Calu3 (cell line): ENCODE measurements at regions of chr20 and their contacts with region 1.

Region 1: DNA sequence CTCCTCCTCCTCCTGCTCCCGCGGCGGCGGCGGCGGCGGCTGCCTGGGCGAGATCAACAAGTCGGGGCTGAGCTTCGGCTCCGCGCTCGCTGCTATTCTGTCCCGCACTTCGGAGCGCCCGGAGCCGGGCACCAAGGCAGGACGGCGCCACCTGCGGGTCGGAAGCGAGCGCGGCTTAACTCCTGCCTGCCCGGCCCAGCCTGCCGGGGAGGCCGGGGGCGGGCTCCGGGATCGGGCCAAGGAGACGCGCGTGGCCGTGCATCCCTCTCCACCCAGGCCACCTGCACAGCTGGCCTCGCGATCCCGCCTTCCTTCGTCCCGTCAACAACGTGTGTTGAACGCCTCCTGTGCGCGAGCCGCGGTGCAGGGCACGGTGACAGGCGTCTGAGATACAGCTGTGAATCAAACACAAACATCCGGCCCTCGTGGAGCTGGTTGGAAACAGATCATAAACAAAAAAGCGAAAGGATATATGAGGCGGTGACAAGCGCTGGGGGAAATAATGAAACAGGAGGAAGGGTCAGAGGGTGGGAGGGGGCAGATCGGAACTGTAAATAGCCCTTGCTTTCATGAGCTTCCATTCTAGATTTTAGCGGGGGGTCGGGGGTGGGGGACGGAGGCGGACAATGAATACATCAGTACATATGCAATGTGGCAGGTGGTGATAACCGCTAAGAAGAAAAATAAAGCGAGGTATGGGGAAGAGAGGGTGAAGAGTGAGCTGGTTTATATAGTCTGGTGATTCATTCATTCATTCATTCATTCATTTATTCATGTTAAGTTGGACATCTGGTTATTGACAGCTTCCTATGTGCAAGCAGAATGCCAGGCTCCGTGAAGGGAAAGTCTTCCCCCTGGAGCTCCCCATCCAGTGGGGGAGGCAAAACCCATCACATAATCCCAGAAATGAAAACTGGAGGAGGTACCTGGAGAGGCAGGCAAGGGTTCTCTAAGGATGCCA is 2.0 kb upstream of the KCNB1 start:
- DNase-seq: peak; percentile 94
- H3K4me3 Mint-ChIP-seq: peak overlapping the region; percentile 70
- H3K27ac Mint-ChIP-seq: no peak overlapping the region
- H3K4me1 Mint-ChIP-seq: no peaks in the 10 kb centered on the region
- H3K27me3 Mint-ChIP-seq: peaks cover 100% of the 10 kb centered on the region
- CTCF ChIP-seq: peak; percentile 86

Region 2: GRCh38 chr20:49338061-49338460 is 146.4 kb before region 1 on chr20:
- CTCF ChIA-PET with region 1: interaction called, 18 read pairs
- intact Hi-C with region 1: loop called (anchors 1 kb)
- DNase-seq: no peak
- H3K4me3 Mint-ChIP-seq: no peak overlapping the region
- H3K27ac Mint-ChIP-seq: no peak overlapping the region
- H3K4me1 Mint-ChIP-seq: no peaks in the 10 kb centered on the region
- H3K27me3 Mint-ChIP-seq: peaks cover 62% of the 10 kb centered on the region
- CTCF ChIP-seq: no peak

Region 3: DNA sequence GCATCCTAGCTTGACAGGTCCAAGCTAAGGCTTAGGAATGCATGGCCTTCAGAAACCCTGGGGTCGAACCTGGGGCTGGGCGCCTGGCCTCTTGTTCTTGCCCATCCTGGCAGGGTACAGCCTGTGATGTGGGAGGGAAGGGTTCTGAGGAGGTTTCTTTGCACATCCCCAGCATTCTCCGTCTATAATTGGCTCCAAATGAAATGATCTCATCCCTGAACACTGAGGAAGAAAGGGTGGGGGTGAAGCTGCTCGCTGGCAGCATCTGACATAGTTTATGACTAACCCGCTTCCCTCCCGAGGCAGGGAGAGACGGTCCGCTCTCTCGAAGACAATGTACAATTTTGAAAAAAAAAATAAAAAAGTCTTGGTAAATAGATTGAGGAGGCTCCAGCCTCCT is 139.5 kb before region 1 on chr20:
- CTCF ChIA-PET with region 1: interaction called, 11 read pairs
- intact Hi-C with region 1: no loop called
- DNase-seq: peak; percentile 72
- H3K4me3 Mint-ChIP-seq: peak overlapping the region; percentile 38
- H3K27ac Mint-ChIP-seq: no peak overlapping the region
- H3K4me1 Mint-ChIP-seq: peaks cover 16% of the 10 kb centered on the region
- H3K27me3 Mint-ChIP-seq: peaks cover 84% of the 10 kb centered on the region
- CTCF ChIP-seq: no peak

Region 4: GRCh38 chr20:49384437-49385088 is 99.9 kb before region 1 on chr20:
- CTCF ChIA-PET with region 1: interaction called, 22 read pairs
- intact Hi-C with region 1: no loop called
- DNase-seq: peak; percentile 89
- H3K4me3 Mint-ChIP-seq: no peak overlapping the region
- H3K27ac Mint-ChIP-seq: no peak overlapping the region
- H3K4me1 Mint-ChIP-seq: peaks cover 8% of the 10 kb centered on the region
- H3K27me3 Mint-ChIP-seq: peaks cover 89% of the 10 kb centered on the region
- CTCF ChIP-seq: peak; percentile 96

Region 5: GRCh38 chr20:49508435-49509199 is 24.2 kb after region 1 on chr20:
- CTCF ChIA-PET with region 1: interaction called, 14 read pairs
- intact Hi-C with region 1: loop called (anchors 2 kb)
- DNase-seq: peak; percentile 32
- H3K4me3 Mint-ChIP-seq: no peak overlapping the region
- H3K27ac Mint-ChIP-seq: no peak overlapping the region
- H3K4me1 Mint-ChIP-seq: no peaks in the 10 kb centered on the region
- H3K27me3 Mint-ChIP-seq: peaks cover 1% of the 10 kb centered on the region
- CTCF ChIP-seq: peak; percentile 75

Region 6: DNA sequence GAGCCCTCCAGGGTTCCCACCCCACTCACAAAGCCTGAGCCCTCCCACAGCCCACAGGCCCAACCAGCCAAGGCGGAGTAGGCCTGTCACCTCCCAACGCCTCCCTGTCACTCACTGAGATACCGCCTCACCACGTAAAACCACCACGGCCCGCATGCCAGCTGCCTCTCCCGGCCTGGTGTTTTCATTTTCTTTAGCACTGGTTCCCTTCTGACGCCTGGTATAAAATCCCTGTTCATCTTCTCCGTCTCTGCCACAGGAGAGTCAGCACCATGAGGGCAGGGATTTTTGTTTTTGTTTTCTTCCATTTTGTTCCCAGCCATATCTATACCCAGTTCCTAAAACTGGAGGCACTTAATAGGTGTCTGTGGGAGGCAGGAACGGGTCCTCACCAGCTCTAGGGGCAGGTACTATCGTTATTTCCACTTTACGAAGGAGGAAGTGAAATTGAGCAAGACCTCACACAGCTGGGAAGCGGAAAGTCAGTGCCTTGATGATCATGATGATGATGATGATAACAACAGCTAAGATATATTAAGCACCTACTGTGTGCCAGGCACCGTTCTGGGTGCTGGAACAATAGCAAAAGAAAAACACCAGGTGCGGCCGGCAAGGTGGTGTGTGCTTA is 556.9 kb after region 1 on chr20:
- CTCF ChIA-PET with region 1: no interaction called
- intact Hi-C with region 1: no loop called
- DNase-seq: no peak
- H3K4me3 Mint-ChIP-seq: no peak overlapping the region
- H3K27ac Mint-ChIP-seq: no peak overlapping the region
- H3K4me1 Mint-ChIP-seq: peaks cover 28% of the 10 kb centered on the region
- H3K27me3 Mint-ChIP-seq: peaks cover 13% of the 10 kb centered on the region
- CTCF ChIP-seq: no peak